ENCODE measurements at regions of chrX and their contacts with region 1.

Region 1: GRCh38 chrX:64205735-64206491 is 405 bp upstream of the AMER1 start:
- DNase-seq: peak; percentile 81
- ATAC-seq: peak; percentile 85
- H3K4me3 ChIP-seq: peak overlapping the region; percentile 73 to 78 (median 74)
- H3K27ac ChIP-seq: peak overlapping the region; percentile 90
- H3K4me1 ChIP-seq: peaks cover 18% of the 10 kb centered on the region
- H3K27me3 ChIP-seq: no peaks in the 10 kb centered on the region; a peak in 1 of 5 replicates
- CTCF ChIP-seq: peak; percentile 55
- EP300 ChIP-seq: no peak
- POLR2A ChIP-seq: peak; percentile 45 to 74; a peak in 3 of 4 replicates
- RAD21 ChIP-seq: no peak

Region 2: GRCh38 chrX:63889001-63889400 is 316.9 kb before region 1 on chrX:
- CTCF ChIA-PET with region 1: no interaction called
- POLR2A ChIA-PET with region 1: no interaction called
- in situ Hi-C with region 1: no loop called
- intact Hi-C with region 1: no loop called
- DNase-seq: no peak
- ATAC-seq: no peak
- H3K4me3 ChIP-seq: no peak overlapping the region
- H3K27ac ChIP-seq: no peak overlapping the region
- H3K4me1 ChIP-seq: no peaks in the 10 kb centered on the region
- H3K27me3 ChIP-seq: no peaks in the 10 kb centered on the region
- CTCF ChIP-seq: no peak
- EP300 ChIP-seq: no peak
- POLR2A ChIP-seq: no peak
- RAD21 ChIP-seq: no peak

Region 3: DNA sequence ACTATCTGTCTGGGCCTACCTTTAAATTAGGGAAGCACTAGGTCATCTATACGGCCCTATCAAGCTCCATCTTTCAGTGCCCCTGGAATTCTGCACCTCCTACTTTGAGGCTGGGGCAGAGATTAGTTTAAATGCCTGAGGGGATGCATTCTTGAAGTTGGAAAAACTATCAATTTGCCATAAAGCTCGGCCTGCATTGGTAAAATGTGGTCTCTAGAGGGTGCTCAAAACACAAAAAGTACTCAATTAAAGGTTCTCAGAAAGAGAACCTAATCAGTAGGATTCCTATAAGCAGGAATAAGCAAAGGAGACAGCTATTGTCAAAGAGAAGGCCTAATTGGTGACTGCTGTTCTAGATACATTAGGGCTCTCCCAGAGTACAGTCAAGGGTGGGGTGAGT is 112.2 kb before region 1 on chrX:
- CTCF ChIA-PET with region 1: no interaction called
- POLR2A ChIA-PET with region 1: no interaction called
- in situ Hi-C with region 1: no loop called
- intact Hi-C with region 1: loop called (anchors 2 kb)
- DNase-seq: no peak
- ATAC-seq: no peak
- H3K4me3 ChIP-seq: no peak overlapping the region
- H3K27ac ChIP-seq: no peak overlapping the region
- H3K4me1 ChIP-seq: no peaks in the 10 kb centered on the region
- H3K27me3 ChIP-seq: no peaks in the 10 kb centered on the region
- CTCF ChIP-seq: peak; percentile 45
- EP300 ChIP-seq: no peak
- POLR2A ChIP-seq: no peak
- RAD21 ChIP-seq: no peak

Region 4: DNA sequence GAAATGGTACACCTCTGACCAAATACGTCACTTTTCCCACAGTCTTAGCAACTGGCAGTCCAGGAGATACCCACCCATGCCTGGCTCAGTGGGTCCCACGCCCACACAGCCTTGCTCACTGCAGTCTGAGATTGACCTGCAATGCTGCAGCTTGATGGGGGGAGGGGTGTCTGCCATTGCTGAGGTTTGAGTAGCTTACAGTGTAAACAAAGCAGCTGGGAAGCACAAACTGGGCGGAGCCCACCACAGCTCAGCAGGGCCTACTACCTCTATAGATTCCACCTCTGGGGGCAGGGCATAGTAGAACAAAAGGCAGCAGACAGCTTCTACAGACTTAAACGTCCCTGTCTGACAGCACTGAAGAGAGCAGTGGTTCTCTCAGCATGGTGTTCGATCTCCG is 53.1 kb before region 1 on chrX:
- CTCF ChIA-PET with region 1: no interaction called
- POLR2A ChIA-PET with region 1: interaction called, 3 read pairs
- in situ Hi-C with region 1: no loop called
- intact Hi-C with region 1: loop called (anchors 2 kb)
- DNase-seq: peak; percentile 30
- ATAC-seq: peak; percentile 63
- H3K4me3 ChIP-seq: no peak overlapping the region
- H3K27ac ChIP-seq: no peak overlapping the region
- H3K4me1 ChIP-seq: no peaks in the 10 kb centered on the region
- H3K27me3 ChIP-seq: no peaks in the 10 kb centered on the region
- CTCF ChIP-seq: no peak
- EP300 ChIP-seq: no peak
- POLR2A ChIP-seq: no peak
- RAD21 ChIP-seq: no peak

Region 5: DNA sequence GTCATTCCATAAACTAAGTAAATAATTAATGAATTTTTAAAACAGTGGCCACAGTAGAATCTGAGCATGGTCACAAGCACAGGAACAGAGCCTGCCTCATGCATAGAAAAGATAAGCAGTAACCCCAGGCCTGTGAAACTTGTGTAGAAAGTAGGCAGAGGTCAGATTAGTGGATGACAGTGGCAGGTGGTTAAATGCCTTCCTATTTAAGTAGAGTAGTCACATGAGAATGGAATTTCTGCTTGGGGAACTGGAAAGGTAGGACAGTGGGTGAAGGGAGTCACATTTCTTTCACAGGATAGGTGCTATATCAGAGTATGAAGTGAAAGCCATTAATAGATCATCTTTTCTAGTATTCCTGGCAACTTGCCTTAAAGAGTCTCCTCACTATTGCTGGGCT is 59.3 kb after region 1 on chrX:
- CTCF ChIA-PET with region 1: no interaction called
- POLR2A ChIA-PET with region 1: no interaction called
- in situ Hi-C with region 1: no loop called
- intact Hi-C with region 1: no loop called
- DNase-seq: no peak
- ATAC-seq: no peak
- H3K4me3 ChIP-seq: no peak overlapping the region
- H3K27ac ChIP-seq: no peak overlapping the region
- H3K4me1 ChIP-seq: no peaks in the 10 kb centered on the region
- H3K27me3 ChIP-seq: no peaks in the 10 kb centered on the region
- CTCF ChIP-seq: no peak
- EP300 ChIP-seq: no peak
- POLR2A ChIP-seq: no peak
- RAD21 ChIP-seq: no peak

Region 6: DNA sequence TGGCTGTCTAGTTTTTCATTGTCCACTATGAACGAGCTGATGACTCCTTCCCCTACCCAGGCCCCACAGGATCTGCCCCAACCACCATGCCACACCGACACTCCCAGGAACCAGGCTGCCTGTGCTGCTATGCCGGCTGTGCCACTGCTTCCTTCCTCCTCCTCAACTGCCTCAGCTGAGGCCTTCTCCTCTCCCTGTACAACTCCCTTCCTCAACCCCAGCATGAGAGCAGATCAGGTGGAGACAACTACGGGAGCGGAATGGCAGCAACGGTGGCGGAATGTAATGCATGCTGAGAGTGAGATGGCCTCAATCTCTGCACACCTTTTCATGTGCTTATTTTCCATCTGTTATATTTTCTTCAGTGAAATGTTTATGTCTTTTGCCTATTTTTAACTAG is 100.8 kb after region 1 on chrX:
- CTCF ChIA-PET with region 1: no interaction called
- POLR2A ChIA-PET with region 1: no interaction called
- in situ Hi-C with region 1: no loop called
- intact Hi-C with region 1: no loop called
- DNase-seq: no peak
- ATAC-seq: no peak
- H3K4me3 ChIP-seq: no peak overlapping the region
- H3K27ac ChIP-seq: no peak overlapping the region
- H3K4me1 ChIP-seq: no peaks in the 10 kb centered on the region
- H3K27me3 ChIP-seq: no peaks in the 10 kb centered on the region
- CTCF ChIP-seq: no peak
- EP300 ChIP-seq: no peak
- POLR2A ChIP-seq: no peak
- RAD21 ChIP-seq: no peak